PC-9 (cell line): ENCODE measurements at regions of chr10 and their contacts with region 1.

Region 1: GRCh38 chr10:28925121-28925698 is 247.9 kb downstream of the BAMBI start:
- DNase-seq: no peak
- H3K4me3 ChIP-seq: no peak overlapping the region
- H3K27ac ChIP-seq: no peak overlapping the region
- H3K4me1 ChIP-seq: no peaks in the 10 kb centered on the region
- H3K27me3 ChIP-seq: no peaks in the 10 kb centered on the region; the same call in 1 of the 2 replicates
- CTCF ChIP-seq: no peak

Region 2: GRCh38 chr10:27646224-27647175 is 1278.7 kb before region 1 on chr10:
- CTCF ChIA-PET with region 1: no interaction called
- POLR2A ChIA-PET with region 1: interaction called, 36 read pairs
- intact Hi-C with region 1: no loop called
- DNase-seq: no peak
- H3K4me3 ChIP-seq: no peak overlapping the region
- H3K27ac ChIP-seq: no peak overlapping the region
- H3K4me1 ChIP-seq: no peaks in the 10 kb centered on the region
- H3K27me3 ChIP-seq: no peaks in the 10 kb centered on the region
- CTCF ChIP-seq: no peak

Region 3: GRCh38 chr10:28984431-28984830 is 59.2 kb after region 1 on chr10:
- CTCF ChIA-PET with region 1: no interaction called
- POLR2A ChIA-PET with region 1: no interaction called
- intact Hi-C with region 1: no loop called
- DNase-seq: peak; percentile 75 to 77
- H3K4me3 ChIP-seq: no peak overlapping the region
- H3K27ac ChIP-seq: no peak overlapping the region
- H3K4me1 ChIP-seq: peaks cover 14% of the 10 kb centered on the region
- H3K27me3 ChIP-seq: no peaks in the 10 kb centered on the region
- CTCF ChIP-seq: no peak